ENCODE measurements at regions of chr12 and their contacts with region 1.

Region 1: GRCh38 chr12:49110464-49111155 is at the start of gene LMBR1L:
- DNase-seq: peak; percentile 92 to 99 (median 95)
- ATAC-seq: peak; percentile 91
- H3K4me3 ChIP-seq: peak within 1 kb of the TSS; percentile 75
- H3K4me3 Mint-ChIP-seq: peak within 1 kb of the TSS; percentile 89
- H3K27ac ChIP-seq: peak within 1 kb of the TSS; percentile 85 to 94
- H3K27ac Mint-ChIP-seq: peak within 1 kb of the TSS; percentile 97
- H3K4me1 ChIP-seq: peaks cover 41% of the 10 kb centered on the region
- H3K4me1 Mint-ChIP-seq: peaks cover 35% of the 10 kb centered on the region
- H3K27me3 ChIP-seq: no peaks in the 10 kb centered on the region
- H3K27me3 Mint-ChIP-seq: no peaks in the 10 kb centered on the region
- CTCF ChIP-seq: peak; percentile 61
- total RNA-seq, gene LMBR1L: 401 to 418 TPM

Region 2: DNA sequence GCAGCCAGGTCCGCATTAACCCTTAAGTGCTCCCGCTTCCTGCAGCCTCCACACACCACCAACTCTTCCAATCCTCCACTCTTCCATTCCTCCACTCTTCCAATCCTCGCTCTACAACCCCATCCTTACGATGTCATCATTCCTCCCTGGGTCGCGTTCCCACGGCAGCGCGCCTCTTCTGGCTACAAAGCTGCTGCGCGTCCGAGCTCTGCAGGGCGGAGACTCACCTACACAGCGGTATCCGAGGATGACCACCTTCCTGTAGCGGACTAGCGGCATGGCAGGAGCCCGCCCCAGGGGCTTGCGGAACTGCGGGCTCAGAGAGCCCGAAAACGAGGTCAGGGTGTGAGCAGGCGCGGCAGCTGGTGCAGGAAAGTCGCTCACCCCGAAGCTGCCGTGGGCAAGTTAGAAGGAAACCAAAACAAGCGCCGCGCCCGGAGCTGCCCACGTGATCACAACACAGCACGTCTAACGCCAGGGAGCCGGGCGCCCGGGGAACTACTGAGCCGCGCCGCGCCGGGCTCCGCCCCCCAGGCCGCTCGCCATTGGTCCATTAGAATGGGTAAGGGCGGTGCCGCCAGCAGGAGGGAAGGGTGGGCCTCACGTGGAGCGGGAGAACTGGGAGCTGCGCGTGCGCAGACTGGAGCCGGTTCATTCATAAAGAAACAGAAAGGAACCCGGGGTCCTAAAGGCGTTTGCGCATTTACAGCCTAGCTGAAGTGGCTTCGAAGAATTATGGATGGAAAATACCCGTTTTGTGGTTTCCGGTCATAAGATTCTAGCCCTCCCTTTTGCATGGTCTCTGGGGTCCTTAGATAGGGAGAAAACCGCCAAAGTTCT is 40.9 kb before region 1 on chr12 and contains the start of gene RHEBL1:
- CTCF ChIA-PET with region 1: interaction called, 7 read pairs
- POLR2A ChIA-PET with region 1: interaction called, 14 read pairs
- intact Hi-C with region 1: no loop called
- DNase-seq: peak; percentile 95 to 99 (median 97)
- ATAC-seq: peak; percentile 98
- H3K4me3 ChIP-seq: peak within 1 kb of the TSS; percentile 97
- H3K4me3 Mint-ChIP-seq: peak within 1 kb of the TSS; percentile 97
- H3K27ac ChIP-seq: peak within 1 kb of the TSS; percentile 61 to 76
- H3K27ac Mint-ChIP-seq: peak within 1 kb of the TSS; percentile 92
- H3K4me1 ChIP-seq: peaks cover 14% of the 10 kb centered on the region
- H3K4me1 Mint-ChIP-seq: peaks cover 21% of the 10 kb centered on the region
- H3K27me3 ChIP-seq: no peaks in the 10 kb centered on the region
- H3K27me3 Mint-ChIP-seq: peaks cover 3% of the 10 kb centered on the region
- CTCF ChIP-seq: no peak
- total RNA-seq, gene RHEBL1: 5.1 to 6.0 TPM

Measured in CD4-positive, alpha-beta T cell (primary cell).